ENCODE measurements at regions of chr4 and their contacts with region 1.

Region 1: DNA sequence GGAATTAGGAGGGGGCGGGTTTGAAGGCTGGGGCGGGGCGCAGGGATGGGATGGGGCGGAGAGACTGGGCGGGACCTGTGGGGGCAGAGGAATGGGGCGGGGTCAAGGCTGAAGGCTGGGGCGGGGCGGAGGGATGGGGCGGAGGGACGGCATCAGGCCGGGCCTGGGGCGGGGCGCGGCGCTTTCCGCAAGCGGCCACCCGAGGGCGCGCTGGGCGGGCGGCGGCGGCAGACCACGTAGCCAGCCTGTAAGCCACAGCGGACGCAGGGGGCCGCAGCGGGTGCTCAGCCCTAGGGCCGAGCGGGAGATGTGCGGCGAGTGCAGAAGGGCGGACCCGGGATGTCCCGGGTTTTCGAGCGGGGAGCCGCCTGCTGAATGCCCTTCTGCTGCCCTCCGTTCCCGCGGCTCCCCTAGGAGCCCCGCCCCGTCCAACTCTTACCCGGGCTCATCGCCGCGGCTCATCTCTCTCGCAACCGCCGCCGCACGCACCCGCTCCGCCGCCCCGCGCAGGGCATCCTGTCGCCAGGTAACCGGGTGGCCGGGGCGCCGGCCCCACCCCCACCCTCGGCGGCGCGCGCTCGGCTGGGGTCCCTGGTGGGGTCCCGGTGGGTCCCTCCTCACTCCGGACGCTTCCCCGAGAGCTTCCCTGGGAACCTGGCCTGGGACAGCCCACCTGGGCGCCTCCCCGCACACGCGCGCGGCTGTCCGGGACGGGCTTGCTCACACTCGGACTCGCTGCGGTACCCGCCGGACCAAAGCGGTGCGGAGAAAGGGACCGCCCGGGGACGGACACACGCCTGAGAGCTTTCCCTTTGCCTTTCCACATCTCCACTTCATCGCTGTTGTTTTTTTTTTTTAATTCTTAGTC is at the start of gene CCDC110:
- DNase-seq: peak; percentile 87 to 100 (median 97)

Region 2: GRCh38 chr4:185343726-185344581 is 127.5 kb before region 1 on chr4:
- intact Hi-C with region 1: no loop called
- DNase-seq: no peak

Region 3: DNA sequence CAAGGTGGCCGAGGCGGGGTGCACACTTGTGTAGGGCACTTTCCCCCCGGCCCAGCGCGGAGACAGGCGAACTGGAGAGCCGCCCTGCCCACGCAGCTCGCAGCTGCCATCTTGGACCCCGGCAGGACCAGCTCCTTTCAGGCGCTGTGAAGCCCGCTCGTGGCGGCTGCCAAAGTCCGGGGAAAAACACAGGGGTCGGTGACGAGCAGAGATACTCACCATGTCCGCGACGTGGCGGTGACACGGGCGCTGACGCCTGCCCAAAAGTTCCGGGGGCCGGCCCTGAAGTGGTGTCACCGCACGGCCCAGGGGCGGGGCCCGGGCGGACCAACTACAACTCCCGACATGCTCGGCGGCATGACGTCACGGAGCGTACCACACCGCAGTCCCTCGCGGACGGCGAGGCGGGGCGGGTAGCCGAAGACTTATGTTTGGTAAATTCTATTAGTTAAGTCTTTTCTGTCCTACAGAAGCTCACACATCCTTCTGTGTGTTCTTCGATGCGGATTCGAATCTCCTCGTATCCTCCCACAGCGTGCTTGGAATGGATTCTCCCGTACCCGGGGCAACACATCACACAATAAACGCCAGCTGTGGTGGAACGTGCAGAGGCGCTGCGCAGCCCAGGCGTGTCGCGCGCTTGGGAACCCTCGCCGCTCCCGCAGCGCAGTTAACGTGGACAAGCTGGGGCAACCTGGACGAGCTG is 45.7 kb before region 1 on chr4 and contains the start of gene UFSP2:
- intact Hi-C with region 1: loop called (anchors 5 kb)
- DNase-seq: peak; percentile 78 to 96 (median 91)

Region 4: GRCh38 chr4:185534866-185535611 is 63.6 kb after region 1 on chr4 and contains the start of gene PDLIM3:
- intact Hi-C with region 1: loop called (anchors 10 kb)
- DNase-seq: peak; percentile 20 to 89 (median 76)

Region 5: DNA sequence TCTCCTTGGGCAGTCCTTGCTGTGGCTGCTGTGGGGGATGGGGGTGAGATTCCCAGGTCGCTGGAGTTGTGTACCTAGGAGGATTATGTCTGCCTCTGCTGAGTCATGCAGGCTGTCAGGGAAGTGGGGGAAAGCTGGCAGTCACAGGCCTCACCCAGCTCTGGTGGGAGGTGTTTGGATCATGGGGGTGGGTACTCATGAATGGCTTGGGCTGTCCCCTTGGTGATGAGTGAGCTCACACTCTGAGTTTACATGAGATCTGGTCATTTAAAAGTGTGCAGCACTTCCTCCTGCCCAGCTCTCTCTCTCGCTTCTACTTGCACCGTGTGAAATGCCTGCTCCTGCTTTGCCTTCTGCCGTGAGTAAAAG is 88.4 kb after region 1 on chr4:
- intact Hi-C with region 1: no loop called
- DNase-seq: peak in 35 of 42 donors; percentile 27 to 81 (median 48)

Region 6: GRCh38 chr4:185597532-185598188 is 126.2 kb after region 1 on chr4:
- intact Hi-C with region 1: loop called (anchors 2 kb)
- DNase-seq: peak in 41 of 42 donors; percentile 68 to 94 (median 83)

Region 7: DNA sequence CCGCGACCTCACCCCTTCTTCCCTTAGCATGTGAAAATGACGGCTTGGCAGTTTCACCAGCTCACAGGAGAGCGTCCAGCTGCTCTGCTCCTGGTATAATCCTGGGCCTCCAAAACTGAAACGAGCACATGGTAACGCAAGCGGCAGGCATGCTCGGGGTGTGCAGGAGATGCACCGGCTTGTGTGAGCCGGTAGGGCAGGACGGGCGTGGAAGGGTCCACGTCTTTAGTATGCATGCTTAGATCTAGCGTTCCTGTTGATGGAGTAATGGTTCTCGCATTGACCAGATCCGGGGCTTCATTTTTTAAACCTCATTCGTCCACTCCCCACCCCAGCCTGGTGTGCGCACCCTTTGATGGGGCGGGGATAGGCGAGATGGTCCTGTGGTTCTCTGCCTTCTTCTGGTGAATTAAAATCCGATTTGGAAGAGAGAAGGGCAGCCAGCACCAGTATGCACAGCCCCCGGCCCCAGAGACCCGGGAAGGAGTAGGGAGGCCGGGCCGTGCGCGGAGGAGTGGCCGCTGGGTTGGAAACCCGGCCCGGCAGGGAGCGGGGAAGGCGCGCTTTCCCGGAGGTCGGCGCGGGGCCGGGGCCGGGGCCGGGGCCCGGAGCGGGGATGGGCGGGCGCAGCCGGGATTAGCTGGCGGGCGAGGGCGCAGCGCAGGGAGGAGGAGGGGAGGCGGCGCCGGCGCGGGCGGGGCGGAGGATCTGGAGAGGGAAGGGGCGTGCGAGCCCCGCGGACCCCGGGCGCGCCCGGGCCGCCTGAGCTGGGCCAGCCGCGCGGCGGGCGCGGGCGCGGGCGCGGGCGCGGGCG is 672.9 kb after region 1 on chr4:
- intact Hi-C with region 1: no loop called
- DNase-seq: peak in 38 of 42 donors; percentile 30 to 80 (median 63)

Measured in head of caudate nucleus (tissue), 42 donors.